ENCODE measurements at regions of chr1 and their contacts with region 1.

Region 1: GRCh38 chr1:15741183-15741850 is 982 bp upstream of the TMEM82 start:
- DNase-seq: peak; percentile 58
- H3K4me3 Mint-ChIP-seq: no peak overlapping the region
- H3K27ac Mint-ChIP-seq: no peak overlapping the region
- H3K4me1 Mint-ChIP-seq: peaks cover 4% of the 10 kb centered on the region
- H3K27me3 Mint-ChIP-seq: no peaks in the 10 kb centered on the region

Region 2: GRCh38 chr1:15595809-15596617 is 145.3 kb before region 1 on chr1:
- intact Hi-C with region 1: loop called (anchors 1 kb)
- DNase-seq: no peak
- H3K4me3 Mint-ChIP-seq: no peak overlapping the region
- H3K27ac Mint-ChIP-seq: no peak overlapping the region
- H3K4me1 Mint-ChIP-seq: no peaks in the 10 kb centered on the region
- H3K27me3 Mint-ChIP-seq: peaks cover 4% of the 10 kb centered on the region

Region 3: DNA sequence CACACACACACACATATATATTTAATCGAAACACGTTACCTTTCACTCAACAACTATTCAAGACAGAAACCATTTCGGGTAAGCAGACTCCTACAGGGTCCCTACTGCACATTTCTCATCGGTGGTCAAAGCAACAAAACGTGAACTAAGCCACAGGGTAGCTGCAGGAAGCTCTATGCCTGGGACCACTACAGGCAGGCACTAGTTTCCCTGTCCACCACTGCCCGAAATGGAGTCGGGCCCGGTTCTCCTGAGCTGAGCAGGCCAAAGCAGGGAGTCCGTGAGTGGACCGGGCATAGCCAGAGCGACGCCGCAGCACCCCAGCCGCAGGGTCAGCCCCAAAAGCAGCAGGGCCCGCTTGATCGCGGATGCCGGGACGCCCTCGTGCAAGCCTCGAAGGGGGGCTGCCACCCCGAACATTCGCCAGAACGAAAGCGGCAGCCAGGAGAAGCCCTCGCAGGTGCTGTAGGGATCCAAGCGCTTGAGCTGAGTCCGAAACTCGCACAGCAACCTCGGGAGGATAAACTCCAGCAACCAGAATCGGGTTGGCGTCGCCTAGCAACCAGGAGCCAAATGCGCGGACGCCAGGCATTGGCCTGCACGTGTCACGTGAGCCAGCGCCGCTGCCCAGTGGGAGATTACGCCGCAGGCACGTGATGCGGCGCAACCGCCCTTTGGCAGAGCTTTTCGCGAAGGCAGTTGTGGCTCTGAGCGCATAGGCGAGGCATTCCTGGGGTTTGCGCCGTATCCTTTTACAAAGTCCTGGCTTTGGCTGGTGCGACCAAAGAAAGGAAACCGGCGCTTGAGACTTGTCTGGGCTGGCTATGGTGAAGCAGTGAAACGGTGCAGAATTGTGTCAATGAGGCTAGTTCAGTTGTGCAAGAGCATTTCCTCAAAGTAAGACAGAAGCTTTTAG is 138.0 kb before region 1 on chr1:
- intact Hi-C with region 1: loop called (anchors 2 kb)
- DNase-seq: peak; percentile 92
- H3K4me3 Mint-ChIP-seq: peak overlapping the region; percentile 69
- H3K27ac Mint-ChIP-seq: no peak overlapping the region
- H3K4me1 Mint-ChIP-seq: peaks cover 10% of the 10 kb centered on the region
- H3K27me3 Mint-ChIP-seq: peaks cover 4% of the 10 kb centered on the region

Region 4: GRCh38 chr1:15788624-15789301 is 47.4 kb after region 1 on chr1:
- intact Hi-C with region 1: no loop called
- DNase-seq: no peak
- H3K4me3 Mint-ChIP-seq: no peak overlapping the region
- H3K27ac Mint-ChIP-seq: no peak overlapping the region
- H3K4me1 Mint-ChIP-seq: peaks cover 5% of the 10 kb centered on the region
- H3K27me3 Mint-ChIP-seq: peaks cover 4% of the 10 kb centered on the region

Measured in activated T-helper 2 cell treated with anti-CD3 and anti-CD28 coated beads, Interferon-gamma antibody, Interleukin-2, Interleukin-4, amounts not matched to agents 10 μg/mL and 5 μg/mL and 100 μg/mL, durations not matched to agents 14 hours and 24 hours and 36 hours (primary cell).